IMR-90 (cell line): ENCODE measurements at regions of chr4 and their contacts with region 1.

Region 1: GRCh38 chr4:173821036-173821435 is 291.0 kb upstream of the HAND2 start:
- DNase-seq: peak; percentile 23
- ATAC-seq: no peak; the same call in 1 of the 2 replicates
- H3K4me3 ChIP-seq: no peak overlapping the region
- H3K27ac ChIP-seq: no peak overlapping the region
- H3K4me1 ChIP-seq: no peaks in the 10 kb centered on the region
- H3K27me3 ChIP-seq: peaks cover 3% of the 10 kb centered on the region
- CTCF ChIP-seq: no peak
- POLR2A ChIP-seq: no peak
- RAD21 ChIP-seq: no peak

Region 2: DNA sequence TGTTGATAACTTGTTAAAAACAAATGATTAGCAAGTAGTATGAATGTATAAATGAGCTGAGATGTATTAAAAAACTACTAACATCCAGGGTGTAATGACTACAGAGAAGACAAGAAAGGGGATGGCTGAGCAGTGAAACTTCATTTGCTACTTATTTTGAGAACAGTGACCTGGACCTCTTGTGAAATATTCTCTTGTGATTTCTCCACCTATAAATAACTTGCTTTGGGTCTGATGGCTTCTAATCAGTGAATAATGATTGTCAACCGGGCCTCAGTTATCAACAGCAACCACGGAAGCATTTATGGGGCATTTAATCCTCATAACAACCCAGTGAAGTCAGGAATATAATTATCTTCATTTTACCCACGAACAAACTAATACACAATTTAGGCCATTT is 136.8 kb before region 1 on chr4:
- CTCF ChIA-PET with region 1: no interaction called
- POLR2A ChIA-PET with region 1: no interaction called
- dilution Hi-C with region 1: no loop called
- in situ Hi-C with region 1: no loop called
- intact Hi-C with region 1: loop called (anchors 5 kb)
- DNase-seq: no peak
- ATAC-seq: no peak
- H3K4me3 ChIP-seq: no peak overlapping the region
- H3K27ac ChIP-seq: no peak overlapping the region
- H3K4me1 ChIP-seq: no peaks in the 10 kb centered on the region; the same call in 1 of the 2 replicates
- H3K27me3 ChIP-seq: no peaks in the 10 kb centered on the region; the same call in 1 of the 2 replicates
- CTCF ChIP-seq: no peak
- POLR2A ChIP-seq: no peak
- RAD21 ChIP-seq: no peak